Heart right ventricle (tissue), 16 donors: ENCODE measurements at regions of chr5 and their contacts with region 1.

Region 1: GRCh38 chr5:57642066-57642465 is 159.5 kb upstream of the ACTBL2 start:
- DNase-seq: no peak
- ATAC-seq: no peak
- H3K4me3 ChIP-seq: no peak overlapping the region
- H3K27ac ChIP-seq: no peak overlapping the region
- H3K4me1 ChIP-seq: no peaks in the 10 kb centered on the region
- H3K27me3 ChIP-seq: no peaks in the 10 kb centered on the region
- CTCF ChIP-seq: no peak

Region 2: DNA sequence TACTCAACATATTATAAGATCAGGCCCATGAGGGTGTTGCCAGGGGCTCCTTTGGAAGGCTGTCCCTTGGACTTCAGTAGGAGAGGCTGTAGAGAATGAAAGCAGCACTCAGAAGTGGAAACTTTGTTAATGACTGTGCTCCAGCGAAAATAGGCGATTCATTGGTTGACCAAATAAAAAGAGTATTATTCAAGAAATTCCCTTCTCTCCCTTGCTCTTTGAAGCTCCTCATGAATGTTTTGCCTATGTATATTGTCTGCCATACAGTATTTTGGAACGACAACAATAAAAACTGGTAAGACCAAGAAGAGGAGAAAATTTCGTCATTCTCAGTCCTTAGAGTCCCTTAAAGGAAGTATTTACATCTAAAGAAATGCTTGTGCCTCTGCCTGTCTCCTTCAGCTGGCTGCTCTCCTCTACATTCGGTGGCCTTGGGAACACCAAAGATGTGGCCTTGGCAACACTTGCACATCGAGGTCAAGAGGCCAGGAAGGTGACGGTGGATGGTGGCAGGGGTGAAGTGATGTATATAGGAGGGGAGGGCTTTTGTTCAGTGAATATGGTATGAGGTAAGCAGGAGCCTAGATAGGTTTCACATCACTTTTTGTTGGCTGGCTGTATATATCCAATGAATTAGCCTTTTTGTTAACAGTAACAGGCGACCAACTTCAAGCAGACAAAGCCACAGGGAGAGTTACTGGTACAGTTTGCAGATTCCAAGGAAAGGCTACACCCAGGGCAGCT is 64.5 kb before region 1 on chr5:
- intact Hi-C with region 1: no loop called
- DNase-seq: no peak
- ATAC-seq: no peak
- H3K4me3 ChIP-seq: no peak overlapping the region
- H3K27ac ChIP-seq: no peak overlapping the region
- H3K4me1 ChIP-seq: peaks cover 0 to under 1% (median 0%) of the 10 kb centered on the region in 9 donors
- H3K27me3 ChIP-seq: no peaks in the 10 kb centered on the region
- CTCF ChIP-seq: no peak

Region 3: GRCh38 chr5:57601996-57602395 is 40.1 kb before region 1 on chr5:
- intact Hi-C with region 1: loop called in 1 of 10 experiments (anchors 1 kb)
- DNase-seq: no peak
- ATAC-seq: no peak
- H3K4me3 ChIP-seq: no peak overlapping the region
- H3K27ac ChIP-seq: no peak overlapping the region
- H3K4me1 ChIP-seq: no peaks in the 10 kb centered on the region
- H3K27me3 ChIP-seq: no peaks in the 10 kb centered on the region
- CTCF ChIP-seq: no peak